Heart right ventricle (tissue), 16 donors: ENCODE measurements at regions of chr1 and their contacts with region 1.

Region 1: DNA sequence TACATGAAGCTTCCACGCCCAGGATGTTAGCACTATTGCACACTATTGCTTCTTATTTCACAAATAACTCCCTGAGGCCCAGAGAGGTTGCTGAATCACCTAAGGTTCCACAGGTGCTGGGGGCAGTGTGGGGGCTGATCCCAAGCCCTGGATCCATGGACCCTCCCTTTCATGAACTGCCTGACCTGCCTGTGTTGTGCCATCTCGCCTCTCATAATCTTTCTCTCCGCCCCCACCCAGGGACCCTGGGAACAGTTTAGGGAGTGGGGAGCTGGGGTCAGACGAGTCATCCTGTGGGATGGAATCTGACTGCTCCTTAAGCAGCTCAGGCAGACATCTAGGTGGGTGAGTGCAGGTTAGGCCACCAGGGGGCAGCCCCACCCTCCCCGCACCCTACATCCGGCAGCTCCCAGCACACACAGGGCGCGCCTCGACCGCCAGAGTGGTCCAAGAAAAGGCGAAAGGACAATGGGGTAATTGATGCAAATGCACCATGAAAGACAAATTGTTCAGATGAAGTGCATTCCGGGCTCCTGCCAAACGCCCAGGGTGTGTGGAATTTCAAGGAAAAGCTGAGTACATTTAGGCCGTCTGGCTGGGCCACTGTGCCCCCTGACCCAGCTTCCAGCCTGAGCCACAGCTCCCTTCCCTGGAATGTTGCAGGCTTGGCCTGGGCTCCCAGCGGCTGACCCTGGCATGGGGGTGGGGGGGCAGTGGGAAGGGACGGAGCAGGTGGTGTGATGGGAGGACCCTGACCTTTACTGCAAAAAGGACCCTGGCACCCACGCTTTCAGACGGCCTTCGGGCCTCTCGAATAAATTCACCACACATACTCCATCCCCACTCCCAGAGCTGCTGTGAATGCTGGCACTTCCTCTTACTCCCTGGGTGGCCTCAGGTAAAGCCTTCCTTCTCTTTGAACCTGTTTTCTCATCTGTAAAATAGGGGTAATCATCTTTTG is 20.8 kb downstream of the PHLDA3 start:
- DNase-seq: peak; percentile 74 to 82
- ATAC-seq: peak; percentile 75 to 84 (median 82)
- H3K4me3 ChIP-seq: no peak overlapping the region
- H3K27ac ChIP-seq: peak overlapping the region in 9 of 10 donors; percentile 27 to 83 (median 64)
- H3K4me1 ChIP-seq: peaks cover 3 to 42% (median 30%) of the 10 kb centered on the region in 9 donors
- H3K27me3 ChIP-seq: no peaks in the 10 kb centered on the region
- CTCF ChIP-seq: peak; percentile 76 to 91 (median 87)

Region 2: GRCh38 chr1:201119206-201120197 is 328.7 kb before region 1 on chr1:
- intact Hi-C with region 1: no loop called
- DNase-seq: peak in 1 of 2 donors; percentile 19
- ATAC-seq: peak in 5 of 8 donors; percentile 45 to 65 (median 57)
- H3K4me3 ChIP-seq: no peak overlapping the region
- H3K27ac ChIP-seq: no peak overlapping the region
- H3K4me1 ChIP-seq: peaks cover 0 to 12% (median 3%) of the 10 kb centered on the region in 9 donors
- H3K27me3 ChIP-seq: peaks cover 0 to 72% (median 31%) of the 10 kb centered on the region in 7 donors
- CTCF ChIP-seq: peak in 8 of 9 donors; percentile 15 to 57 (median 46)

Region 3: DNA sequence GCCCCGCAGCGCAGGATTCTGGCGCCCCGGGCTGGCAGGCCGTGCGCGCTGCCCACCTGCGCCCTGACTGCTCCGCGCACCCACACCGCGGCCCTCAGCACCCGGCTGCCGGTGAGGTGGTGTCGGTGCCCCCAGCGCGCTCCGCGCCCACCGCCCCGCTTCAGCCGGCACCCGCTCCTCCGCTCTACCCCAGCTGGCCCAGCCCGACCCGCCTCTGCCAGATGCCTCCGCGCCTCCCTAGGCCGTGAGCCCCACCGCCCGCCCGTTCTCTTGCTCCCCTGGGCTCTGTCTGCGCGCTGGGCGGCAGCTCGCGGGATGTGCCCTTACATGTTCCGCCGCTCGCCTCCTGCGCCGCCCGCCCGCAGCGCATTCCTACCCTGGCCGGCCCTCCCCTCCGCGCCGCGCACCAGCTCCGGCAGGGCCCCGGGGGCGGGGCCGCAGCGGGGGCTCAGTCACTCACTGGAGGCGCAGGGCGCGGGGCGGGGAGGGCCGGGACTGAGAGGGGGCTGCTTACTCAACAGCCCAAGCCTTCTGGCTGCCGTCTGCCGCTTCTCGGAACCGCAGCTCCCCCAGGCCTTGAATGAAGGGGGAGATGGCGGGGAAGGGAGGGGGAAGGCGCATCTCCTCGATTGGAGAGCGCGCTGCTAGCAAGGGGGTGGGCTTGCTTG is 20.8 kb after region 1 on chr1 and contains the start of gene PHLDA3:
- intact Hi-C with region 1: loop called in 1 of 10 experiments (anchors 2 kb)
- DNase-seq: peak; percentile 87
- ATAC-seq: peak; percentile 81 to 91 (median 86)
- H3K4me3 ChIP-seq: peak within 1 kb of the TSS; percentile 65 to 99 (median 84)
- H3K27ac ChIP-seq: peak within 1 kb of the TSS; percentile 84 to 97 (median 94)
- H3K4me1 ChIP-seq: peaks cover 0 to 41% (median 24%) of the 10 kb centered on the region in 9 donors
- H3K27me3 ChIP-seq: peaks cover 0 to 25% (median 0%) of the 10 kb centered on the region in 7 donors
- CTCF ChIP-seq: peak in 1 of 9 donors; percentile 5
- total RNA-seq, gene PHLDA3: 14.4 to 40.0 (median 23.6) TPM

Region 4: GRCh38 chr1:201476670-201477344 is 28.6 kb after region 1 on chr1:
- intact Hi-C with region 1: loop called in 7 of 10 experiments (anchors 1 to 5 kb)
- DNase-seq: no peak
- ATAC-seq: no peak
- H3K4me3 ChIP-seq: no peak overlapping the region
- H3K27ac ChIP-seq: no peak overlapping the region
- H3K4me1 ChIP-seq: peaks cover 9 to 29% (median 20%) of the 10 kb centered on the region in 9 donors
- H3K27me3 ChIP-seq: peaks cover 0 to 7% (median 0%) of the 10 kb centered on the region in 7 donors
- CTCF ChIP-seq: no peak

Region 5: DNA sequence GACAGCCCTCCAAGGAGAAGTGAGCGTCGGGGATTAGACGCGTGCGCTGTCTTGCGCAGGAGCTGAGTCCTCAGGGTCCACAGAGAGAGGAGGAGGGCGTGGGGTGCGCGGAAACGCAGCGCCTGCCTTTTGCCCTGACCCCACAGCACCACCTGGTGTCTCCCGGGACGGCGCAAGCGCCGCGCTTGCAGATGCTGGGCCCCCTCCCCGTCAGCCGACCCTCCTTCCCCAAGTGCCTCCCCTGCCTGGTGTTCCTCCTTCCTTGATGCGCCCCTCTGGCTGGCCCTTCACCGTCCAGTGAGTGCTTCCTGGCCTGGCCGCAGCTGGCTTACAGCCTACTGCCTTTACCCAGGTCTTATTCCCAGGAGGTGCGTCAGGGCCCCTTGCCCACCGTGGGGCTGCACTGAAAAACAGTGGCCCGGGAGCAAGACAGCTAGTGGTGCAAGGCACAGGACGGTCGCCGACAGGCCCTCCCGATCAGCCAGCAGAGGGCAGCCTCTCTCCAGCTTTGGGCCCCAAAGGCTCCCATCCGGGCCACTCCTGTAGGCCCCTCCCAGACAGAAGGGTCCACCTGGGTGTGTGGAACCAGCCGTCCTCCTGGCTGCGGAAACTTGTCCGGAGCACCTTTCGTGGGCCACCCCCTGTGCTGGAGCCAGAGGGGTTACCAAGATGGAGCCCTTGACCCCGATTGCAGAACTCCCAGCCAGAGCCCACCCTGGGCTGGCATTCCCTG is 33.7 kb after region 1 on chr1:
- intact Hi-C with region 1: loop called in 7 of 10 experiments (anchors 1 to 5 kb)
- DNase-seq: peak; percentile 90
- ATAC-seq: peak; percentile 80 to 94 (median 90)
- H3K4me3 ChIP-seq: peak overlapping the region in 8 of 10 donors; percentile 14 to 57 (median 42)
- H3K27ac ChIP-seq: peak overlapping the region in 9 of 10 donors; percentile 0 to 81 (median 75)
- H3K4me1 ChIP-seq: peaks cover 9 to 48% (median 36%) of the 10 kb centered on the region in 9 donors
- H3K27me3 ChIP-seq: peaks cover 0 to 6% (median 0%) of the 10 kb centered on the region in 7 donors
- CTCF ChIP-seq: peak; percentile 90 to 98 (median 95)

Region 6: DNA sequence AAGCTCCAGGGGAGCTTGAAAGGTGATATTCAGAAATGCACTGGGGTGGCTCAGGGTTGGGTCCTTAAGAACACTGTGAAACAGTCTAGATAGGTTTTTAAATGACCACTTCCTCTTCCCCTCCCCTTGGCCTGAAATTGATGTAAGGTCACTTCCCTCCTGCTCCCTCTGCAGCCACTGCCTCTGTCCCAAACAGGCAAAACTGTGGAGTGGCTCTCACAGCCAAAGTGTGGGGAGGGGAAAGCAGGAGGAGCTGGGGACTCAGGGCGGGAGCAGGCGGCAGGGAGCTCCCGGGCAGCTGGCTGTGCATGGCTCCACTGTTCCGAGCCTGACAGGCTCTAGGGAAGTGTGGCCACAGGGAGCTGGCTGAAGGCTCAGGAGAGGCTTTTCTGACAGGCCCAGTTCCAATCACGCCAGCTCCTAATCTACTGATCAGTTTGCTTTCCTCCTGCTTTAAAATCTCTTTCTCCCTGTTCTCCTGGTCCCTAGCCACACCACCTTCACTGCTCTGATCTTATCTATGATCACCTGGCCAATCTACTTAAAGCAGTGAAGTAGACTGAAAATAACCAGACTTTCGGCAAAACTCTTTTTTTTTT is 63.8 kb after region 1 on chr1:
- intact Hi-C with region 1: loop called (anchors 2 to 5 kb)
- DNase-seq: peak; percentile 76 to 80
- ATAC-seq: peak; percentile 67 to 88 (median 81)
- H3K4me3 ChIP-seq: peak overlapping the region in 2 of 10 donors; percentile 4 to 10
- H3K27ac ChIP-seq: peak overlapping the region; percentile 49 to 88 (median 77)
- H3K4me1 ChIP-seq: peaks cover 7 to 41% (median 33%) of the 10 kb centered on the region in 9 donors
- H3K27me3 ChIP-seq: no peaks in the 10 kb centered on the region
- CTCF ChIP-seq: peak in 1 of 9 donors; percentile 12